ENCODE measurements at regions of chr1 and their contacts with region 1.

Region 1: DNA sequence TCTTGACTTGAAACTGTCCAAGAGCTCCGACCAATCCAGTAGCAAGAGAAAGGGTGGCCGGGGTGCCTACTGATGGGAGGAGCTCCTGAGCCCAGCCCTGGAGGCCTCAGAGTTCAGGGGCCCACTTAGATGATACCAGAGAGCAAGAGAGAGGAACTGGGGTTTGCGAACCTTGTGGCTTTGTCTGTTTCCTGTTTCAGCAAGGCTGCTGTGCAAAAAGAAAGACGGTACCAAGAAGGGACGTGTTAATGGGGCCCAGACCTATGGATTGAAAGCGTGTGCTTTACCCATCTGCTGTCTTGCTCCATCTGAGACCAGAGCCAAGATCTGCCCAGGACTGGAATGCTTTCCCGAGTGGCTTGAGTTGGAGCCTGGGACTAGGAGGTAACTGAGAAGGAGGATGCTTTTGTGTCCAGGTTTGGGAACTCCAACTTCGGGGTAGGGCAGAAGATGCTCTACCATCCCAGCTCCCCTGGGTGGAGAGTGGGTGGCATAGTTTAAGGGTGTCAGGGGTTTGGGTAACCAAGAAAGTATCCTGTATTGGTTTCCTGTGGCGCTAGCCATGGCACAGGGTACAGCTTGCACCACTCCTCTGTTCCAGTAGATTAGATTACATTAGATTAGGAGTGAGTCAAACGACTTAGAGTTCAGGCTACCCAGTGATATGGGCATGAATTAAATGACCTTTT is at the start of gene TRAF3IP3:
- DNase-seq: peak; percentile 55 to 59
- ATAC-seq: peak; percentile 58
- total RNA-seq, gene TRAF3IP3: 2.3 to 4.4 TPM

Region 2: GRCh38 chr1:209576798-209577197 is 179.3 kb before region 1 on chr1:
- intact Hi-C with region 1: loop called in 1 of 2 experiments (anchors 10 kb)
- DNase-seq: peak; percentile 63 to 82
- ATAC-seq: peak; percentile 99